ENCODE measurements at regions of chr18 and their contacts with region 1.

Region 1: DNA sequence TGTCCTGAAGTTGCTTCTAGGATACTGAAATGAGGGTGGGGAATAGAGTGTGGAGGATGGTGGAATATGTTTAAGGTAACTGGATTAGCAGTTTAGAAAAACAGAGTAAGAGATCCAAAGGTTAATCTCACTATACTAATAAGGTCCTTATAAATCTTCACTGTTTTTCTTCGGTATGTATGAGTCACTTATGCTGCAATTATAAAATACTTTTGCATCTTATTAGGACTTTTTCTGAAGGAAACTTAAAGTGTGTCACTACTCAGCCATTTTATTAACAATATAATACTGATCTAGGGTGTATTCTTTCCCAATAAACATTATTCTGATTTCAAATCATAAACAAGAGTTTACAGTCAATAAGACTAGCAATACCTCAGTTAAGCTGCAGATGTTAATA is 182.3 kb downstream of the ZNF521 start:
- DNase-seq: no peak
- H3K4me3 ChIP-seq: no peak overlapping the region
- H3K27ac ChIP-seq: no peak overlapping the region
- H3K4me1 ChIP-seq: no peaks in the 10 kb centered on the region
- H3K27me3 ChIP-seq: no peaks in the 10 kb centered on the region
- CTCF ChIP-seq: no peak
- POLR2A ChIP-seq: no peak

Region 2: DNA sequence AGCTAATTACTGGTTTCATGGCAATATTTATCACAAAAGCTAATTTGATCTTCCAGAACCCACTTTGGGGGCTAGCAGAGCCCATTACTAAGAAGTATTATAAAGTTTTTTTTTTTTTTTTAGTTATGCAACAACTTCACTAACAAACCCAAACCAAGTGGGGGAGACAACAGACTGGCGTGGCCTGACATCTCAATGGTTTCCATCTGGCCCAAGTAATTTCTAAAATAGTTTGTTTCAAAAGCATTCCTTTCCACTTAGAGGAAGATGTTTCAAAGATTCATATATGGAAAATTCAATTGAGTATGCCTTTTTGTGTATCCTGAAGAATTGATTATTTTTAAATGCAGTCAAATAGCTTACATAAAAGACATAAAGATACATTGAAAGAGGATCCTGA is 342.2 kb before region 1 on chr18:
- intact Hi-C with region 1: loop called (anchors 10 kb)
- DNase-seq: no peak
- H3K4me3 ChIP-seq: no peak overlapping the region
- H3K27ac ChIP-seq: no peak overlapping the region
- H3K4me1 ChIP-seq: no peaks in the 10 kb centered on the region
- H3K27me3 ChIP-seq: no peaks in the 10 kb centered on the region
- CTCF ChIP-seq: no peak
- POLR2A ChIP-seq: no peak

Measured in prostate gland (tissue), 2 donors.